ENCODE measurements at regions of chr19 and their contacts with region 1.

Region 1: GRCh38 chr19:38142176-38143035 is 81.6 kb downstream of the DPF1 start:
- DNase-seq: peak; percentile 77
- H3K4me3 Mint-ChIP-seq: no peak overlapping the region
- H3K27ac Mint-ChIP-seq: no peak overlapping the region
- H3K4me1 Mint-ChIP-seq: peaks cover 6% of the 10 kb centered on the region
- H3K27me3 Mint-ChIP-seq: no peaks in the 10 kb centered on the region

Region 2: DNA sequence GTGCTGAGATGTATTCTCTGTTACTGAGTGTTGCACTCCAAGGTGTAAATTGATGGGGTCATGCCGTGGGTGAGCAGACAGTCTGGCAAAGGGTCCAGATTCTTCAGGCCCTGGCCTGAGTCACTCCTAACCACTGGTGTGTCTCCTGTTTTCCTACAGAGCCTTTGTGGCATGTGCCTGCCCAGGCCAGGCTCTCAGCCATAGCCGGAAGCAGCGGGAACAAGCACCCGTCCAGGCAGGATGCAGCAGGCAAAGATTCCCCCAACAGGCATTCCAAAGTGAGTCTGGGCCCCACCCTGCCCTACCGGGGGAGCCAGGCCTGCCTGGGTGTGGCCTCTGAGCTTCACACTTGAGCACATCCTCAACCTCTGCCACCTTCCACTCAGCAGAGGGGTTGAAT is 19.7 kb after region 1 on chr19:
- intact Hi-C with region 1: no loop called
- DNase-seq: no peak
- H3K4me3 Mint-ChIP-seq: no peak overlapping the region
- H3K27ac Mint-ChIP-seq: no peak overlapping the region
- H3K4me1 Mint-ChIP-seq: no peaks in the 10 kb centered on the region
- H3K27me3 Mint-ChIP-seq: no peaks in the 10 kb centered on the region

Region 3: DNA sequence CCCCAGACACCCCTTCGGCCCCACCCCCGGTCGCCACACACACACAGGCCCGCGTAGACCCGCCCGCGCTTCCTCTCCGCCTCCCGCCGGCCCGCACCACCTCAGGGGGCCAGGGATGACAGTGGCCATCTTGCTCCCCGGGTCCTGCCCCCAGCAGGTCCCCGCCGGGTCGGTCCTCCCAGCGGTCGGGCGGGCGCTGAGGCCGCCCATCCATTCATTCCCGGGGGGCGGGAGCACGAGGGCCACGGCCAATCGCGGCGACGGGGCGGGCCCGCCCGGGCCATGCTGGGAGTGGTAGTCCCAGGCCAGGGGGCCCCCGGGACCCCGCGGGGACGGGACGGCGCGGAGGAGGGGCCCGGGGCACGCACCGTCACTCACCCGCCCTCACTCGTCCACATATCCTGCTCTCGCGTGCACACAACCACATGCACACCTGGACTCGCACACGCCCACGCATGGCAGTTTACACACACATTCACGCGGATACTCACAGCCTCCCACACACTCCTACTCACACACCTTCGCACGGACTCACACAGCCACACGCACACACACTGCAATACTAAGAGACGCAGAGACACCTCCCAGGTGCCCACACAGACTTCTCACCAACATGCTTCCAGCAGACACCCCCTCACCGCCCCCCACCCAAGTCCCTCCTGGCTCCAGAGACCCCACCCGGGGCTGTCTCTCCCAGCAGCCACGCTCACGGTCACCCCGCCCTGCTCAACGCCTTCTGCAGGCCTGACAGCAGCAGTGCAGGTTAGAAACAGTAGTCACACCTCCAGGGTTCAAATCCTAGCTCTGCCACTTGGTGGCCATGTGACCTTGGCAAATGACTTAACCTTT is 81.8 kb after region 1 on chr19 and contains the start of gene DPF1:
- intact Hi-C with region 1: loop called (anchors 10 kb)
- DNase-seq: peak; percentile 88
- H3K4me3 Mint-ChIP-seq: peak within 1 kb of the TSS; percentile 88
- H3K27ac Mint-ChIP-seq: peak within 1 kb of the TSS; percentile 82
- H3K4me1 Mint-ChIP-seq: peaks cover 24% of the 10 kb centered on the region
- H3K27me3 Mint-ChIP-seq: peaks cover 58% of the 10 kb centered on the region
- total RNA-seq, gene DPF1: 1.8 and 2.0 TPM in 2 replicates

Measured in activated CD4-positive, alpha-beta T cell treated with anti-CD3 and anti-CD28 coated beads, Interleukin-2, amount 10 ng/mL, durations not matched to agents 24 days and 14 days (primary cell).